HCT116 (cell line): ENCODE measurements at regions of chr9 and their contacts with region 1.

Region 1: GRCh38 chr9:128552153-128552743 is at the start of gene SPTAN1:
- DNase-seq: peak; percentile 62
- ATAC-seq: peak; percentile 88
- H3K4me3 ChIP-seq: peak within 1 kb of the TSS; percentile 60 to 93
- H3K27ac ChIP-seq: peak within 1 kb of the TSS; percentile 82
- H3K4me1 ChIP-seq: peaks cover 35 to 49% of the 10 kb centered on the region in 2 experiments
- H3K27me3 ChIP-seq: no peaks in the 10 kb centered on the region
- CTCF ChIP-seq: no peak
- POLR2A ChIP-seq: peak; percentile 99
- RAD21 ChIP-seq: no peak
- total RNA-seq, gene SPTAN1: 111 TPM

Region 2: GRCh38 chr9:128455849-128456612 is 96.2 kb before region 1 on chr9 and contains the start of gene ODF2:
- CTCF ChIA-PET with region 1: no interaction called
- POLR2A ChIA-PET with region 1: interaction called, 3 read pairs
- RAD21 ChIA-PET with region 1: no interaction called
- intact Hi-C with region 1: loop called (anchors 5 kb)
- DNase-seq: peak; percentile 87
- ATAC-seq: peak; percentile 89
- H3K4me3 ChIP-seq: peak within 1 kb of the TSS; percentile 82 to 85
- H3K27ac ChIP-seq: peak within 1 kb of the TSS; percentile 82
- H3K4me1 ChIP-seq: peaks cover 5 to 22% of the 10 kb centered on the region in 2 experiments; a peak in 3 of 4 replicates
- H3K27me3 ChIP-seq: no peaks in the 10 kb centered on the region
- CTCF ChIP-seq: no peak
- POLR2A ChIP-seq: peak; percentile 73
- RAD21 ChIP-seq: no peak
- total RNA-seq, gene ODF2: 46.8 TPM

Region 3: GRCh38 chr9:128504485-128505413 is 47.5 kb before region 1 on chr9 and contains the start of gene GLE1:
- CTCF ChIA-PET with region 1: no interaction called
- POLR2A ChIA-PET with region 1: interaction called, 5 read pairs
- RAD21 ChIA-PET with region 1: no interaction called
- intact Hi-C with region 1: loop called (anchors 5 kb)
- DNase-seq: peak; percentile 83
- ATAC-seq: peak; percentile 94
- H3K4me3 ChIP-seq: peak within 1 kb of the TSS; percentile 85 to 96
- H3K27ac ChIP-seq: peak within 1 kb of the TSS; percentile 62
- H3K4me1 ChIP-seq: peaks cover 11 to 23% of the 10 kb centered on the region in 2 experiments
- H3K27me3 ChIP-seq: no peaks in the 10 kb centered on the region
- CTCF ChIP-seq: no peak
- POLR2A ChIP-seq: peak; percentile 94
- RAD21 ChIP-seq: no peak
- total RNA-seq, gene GLE1: 36.6 TPM

Region 4: DNA sequence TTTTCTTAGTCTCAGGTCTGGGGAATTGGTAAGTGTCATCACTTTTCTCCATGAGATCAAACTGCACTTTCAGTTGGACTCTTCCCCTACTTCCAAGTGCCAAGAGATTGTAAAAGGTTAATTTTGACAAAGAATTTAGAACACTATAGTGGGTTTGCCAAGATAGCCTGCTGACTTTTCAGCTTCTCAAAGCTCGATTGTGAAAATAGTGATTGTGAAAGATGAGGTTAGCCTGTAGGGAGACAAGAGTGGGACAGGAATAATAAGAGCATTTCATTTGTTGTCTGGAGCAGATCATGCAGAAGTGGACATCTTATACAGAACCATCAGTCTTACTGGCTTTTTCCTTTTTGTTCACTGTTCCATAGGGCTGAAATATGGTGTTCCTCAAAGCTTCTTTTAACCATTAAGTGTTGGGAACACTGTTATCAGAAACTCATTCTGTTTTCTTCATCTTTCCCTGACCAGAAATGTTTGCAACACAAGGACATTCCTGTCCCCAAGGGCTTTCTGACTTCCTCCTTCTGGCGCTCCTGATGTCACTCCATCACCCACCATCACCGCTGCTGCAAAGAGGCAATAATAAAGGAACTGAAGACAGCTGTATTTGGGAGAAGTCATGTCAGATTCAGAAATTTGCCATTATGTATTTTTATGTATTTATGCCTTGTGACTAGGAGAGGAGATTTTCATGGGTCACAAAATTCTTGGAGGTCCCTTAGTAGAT is 11.5 kb before region 1 on chr9:
- CTCF ChIA-PET with region 1: no interaction called
- POLR2A ChIA-PET with region 1: interaction called, 10 read pairs
- RAD21 ChIA-PET with region 1: no interaction called
- intact Hi-C with region 1: no loop called
- DNase-seq: no peak
- ATAC-seq: no peak
- H3K4me3 ChIP-seq: no peak overlapping the region
- H3K27ac ChIP-seq: no peak overlapping the region
- H3K4me1 ChIP-seq: no peaks in the 10 kb centered on the region
- H3K27me3 ChIP-seq: no peaks in the 10 kb centered on the region
- CTCF ChIP-seq: no peak
- POLR2A ChIP-seq: no peak
- RAD21 ChIP-seq: no peak